A549 (cell line): ENCODE measurements at regions of chr10 and their contacts with region 1.

Region 1: DNA sequence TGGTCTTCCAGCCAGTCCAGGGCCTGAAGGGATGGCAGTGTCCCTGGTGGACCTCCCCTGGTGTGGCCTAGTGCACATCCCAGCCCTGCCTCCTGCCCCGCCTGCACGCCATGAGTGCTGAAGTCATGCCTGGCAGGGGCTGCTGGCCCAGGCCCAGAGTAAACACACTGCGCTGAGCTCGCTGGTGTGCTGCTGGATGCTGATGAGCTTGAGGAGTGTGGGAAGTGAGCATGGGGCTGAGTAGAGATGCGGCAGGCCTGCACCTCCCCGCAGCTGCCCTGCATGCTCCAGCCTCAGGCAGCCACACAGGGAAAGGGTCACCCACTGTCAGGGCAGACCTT is 43.2 kb downstream of the HTRA1 start:
- DNase-seq: peak; percentile 35 to 75
- ATAC-seq: peak; percentile 90 to 98
- H3K4me3 ChIP-seq: no peak overlapping the region
- H3K27ac ChIP-seq: peak overlapping the region in 1 of 2 experiments; percentile 68; a peak in 3 of 6 replicates
- H3K4me1 ChIP-seq: peaks cover 12% of the 10 kb centered on the region
- CTCF ChIP-seq: no peak
- EP300 ChIP-seq: no peak
- POLR2A ChIP-seq: no peak
- RAD21 ChIP-seq: no peak

Region 2: GRCh38 chr10:122468926-122469781 is 35.4 kb before region 1 on chr10:
- CTCF ChIA-PET with region 1: interaction called, 12 read pairs
- POLR2A ChIA-PET with region 1: no interaction called
- DNase-seq: peak; percentile 88 to 89
- ATAC-seq: peak; percentile 95 to 98
- H3K4me3 ChIP-seq: no peak overlapping the region
- H3K27ac ChIP-seq: peak overlapping the region; percentile 68 to 86
- H3K4me1 ChIP-seq: peaks cover 24% of the 10 kb centered on the region
- CTCF ChIP-seq: peak; percentile 29; the same call in 2 of the 3 replicates
- EP300 ChIP-seq: peak; percentile 82 to 84; a peak in 3 of 5 replicates
- POLR2A ChIP-seq: no peak
- RAD21 ChIP-seq: peak; percentile 50 to 67